Left colon (tissue), 2 donors: ENCODE measurements at regions of chr11 and their contacts with region 1.

Region 1: GRCh38 chr11:95231127-95231880 is at the start of gene SESN3:
- DNase-seq: peak; percentile 98 to 99
- ATAC-seq: peak; percentile 92
- total RNA-seq, gene SESN3: 9.2 to 15.7 TPM

Region 2: DNA sequence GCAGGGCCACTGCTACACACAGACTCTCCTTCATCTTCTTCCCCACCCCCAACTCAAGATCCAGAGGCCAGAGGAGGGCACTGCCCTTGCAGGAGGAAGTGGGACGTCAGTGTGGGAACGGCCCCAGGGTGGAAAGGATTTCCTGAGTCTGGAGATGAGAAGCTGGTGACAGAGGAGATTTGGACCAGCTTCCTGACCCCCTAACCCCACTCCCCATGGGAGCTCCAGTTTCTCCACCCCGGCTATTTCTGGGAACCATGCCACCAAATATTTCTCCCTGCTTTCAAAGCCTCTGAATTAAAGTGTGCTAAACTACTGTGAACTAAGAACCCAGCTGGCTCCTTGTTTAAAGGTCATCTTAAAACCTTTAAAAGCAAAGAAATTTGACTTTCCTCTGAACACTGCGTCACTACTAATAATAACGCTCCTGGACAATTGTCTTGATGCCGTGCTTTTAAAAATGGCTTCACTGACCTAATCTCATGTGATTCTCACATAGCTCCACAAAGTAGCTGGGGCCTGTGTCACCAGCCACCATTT is 304.5 kb before region 1 on chr11:
- intact Hi-C with region 1: no loop called
- DNase-seq: peak; percentile 46 to 54
- ATAC-seq: peak; percentile 17

Region 3: DNA sequence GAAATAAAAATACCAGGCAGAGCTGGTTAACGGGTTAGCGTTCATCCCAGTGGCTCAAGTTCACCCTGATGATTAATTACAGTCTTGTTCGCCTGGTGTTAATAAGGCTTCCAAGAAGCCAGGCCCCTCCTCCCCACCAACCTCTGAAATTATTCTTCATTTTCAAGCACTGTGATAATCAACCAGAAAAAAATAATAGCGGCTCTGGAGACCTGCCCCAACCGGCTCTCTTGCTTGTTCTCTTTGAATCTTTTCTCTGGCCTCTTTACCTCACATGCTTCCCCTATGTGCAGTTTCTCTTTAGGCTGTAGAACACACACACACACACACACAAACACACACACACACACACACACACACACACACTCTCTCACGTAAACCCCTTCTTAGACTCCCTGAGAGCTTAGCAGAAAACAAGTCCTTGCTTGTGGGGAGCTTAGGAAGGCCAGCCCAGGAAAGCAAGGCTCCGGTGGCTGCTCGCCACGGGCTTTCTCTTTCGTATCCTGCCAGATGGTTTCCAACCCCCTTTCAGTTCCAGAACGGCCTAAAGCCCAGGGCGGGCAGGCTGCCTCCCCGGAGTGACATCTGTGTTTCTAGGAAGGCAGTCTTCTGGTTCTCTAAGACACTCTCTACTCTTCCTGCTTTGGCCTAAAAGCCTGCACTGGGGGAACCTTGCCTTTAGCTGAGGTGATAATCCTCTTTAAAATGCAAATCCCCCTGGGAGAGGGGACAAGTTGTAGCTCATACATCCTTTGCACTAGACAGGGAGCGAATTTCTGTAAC is 106.1 kb after region 1 on chr11:
- intact Hi-C with region 1: loop called in 1 of 2 experiments (anchors 5 kb)
- DNase-seq: peak; percentile 31 to 51
- ATAC-seq: peak; percentile 24

Region 4: DNA sequence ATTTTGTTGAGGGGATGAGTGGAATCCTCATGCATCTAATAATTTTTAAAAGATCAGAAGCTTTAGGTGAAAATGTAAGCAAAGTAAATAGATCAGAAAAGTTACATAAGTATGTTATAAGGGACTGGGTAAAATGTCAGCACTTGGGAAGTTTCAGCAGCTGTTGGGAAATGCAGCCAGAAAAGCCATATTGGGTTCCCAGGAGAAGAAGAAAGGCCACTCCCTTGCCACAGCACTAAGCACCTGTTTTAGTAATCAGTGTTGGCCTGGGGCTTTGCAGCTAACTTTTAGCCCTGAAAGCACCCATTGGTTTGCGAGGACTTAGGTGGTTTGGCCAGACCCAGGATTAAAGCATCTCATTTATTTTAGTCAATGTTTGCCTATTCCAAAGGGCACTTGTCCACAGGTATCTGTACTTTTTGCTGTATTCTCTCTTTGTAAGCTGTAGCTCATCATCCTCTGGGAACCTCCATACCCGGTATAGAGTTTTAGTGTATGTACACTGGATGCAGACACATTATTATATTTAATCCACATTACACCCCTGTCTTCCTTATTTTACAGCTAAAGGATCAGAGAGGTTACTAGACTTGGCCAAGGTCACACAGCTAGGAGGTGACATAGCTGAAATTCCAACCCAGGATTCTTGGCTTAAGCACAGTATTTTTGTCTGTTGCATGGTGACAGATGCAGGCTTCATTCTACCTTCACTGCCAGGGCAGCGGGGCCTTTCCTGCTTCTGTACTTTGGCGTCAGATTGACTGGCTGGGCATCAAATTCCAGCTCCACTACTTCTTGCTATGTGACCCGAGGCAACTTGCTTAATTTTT is 127.4 kb after region 1 on chr11:
- intact Hi-C with region 1: no loop called
- DNase-seq: no peak
- ATAC-seq: no peak